Caco-2 (cell line): ENCODE measurements at regions of chr2 and their contacts with region 1.

Region 1: GRCh38 chr2:15782009-15782751 is 158.2 kb upstream of the MYCN start:
- DNase-seq: peak; percentile 92 to 95
- H3K4me3 ChIP-seq: no peak overlapping the region
- H3K4me3 Mint-ChIP-seq: peak overlapping the region; percentile 31
- H3K27ac Mint-ChIP-seq: peak overlapping the region; percentile 17
- H3K4me1 ChIP-seq: peaks cover 44% of the 10 kb centered on the region
- H3K4me1 Mint-ChIP-seq: peaks cover 45% of the 10 kb centered on the region
- H3K27me3 ChIP-seq: no peaks in the 10 kb centered on the region
- H3K27me3 Mint-ChIP-seq: no peaks in the 10 kb centered on the region
- CTCF ChIP-seq: no peak

Region 2: DNA sequence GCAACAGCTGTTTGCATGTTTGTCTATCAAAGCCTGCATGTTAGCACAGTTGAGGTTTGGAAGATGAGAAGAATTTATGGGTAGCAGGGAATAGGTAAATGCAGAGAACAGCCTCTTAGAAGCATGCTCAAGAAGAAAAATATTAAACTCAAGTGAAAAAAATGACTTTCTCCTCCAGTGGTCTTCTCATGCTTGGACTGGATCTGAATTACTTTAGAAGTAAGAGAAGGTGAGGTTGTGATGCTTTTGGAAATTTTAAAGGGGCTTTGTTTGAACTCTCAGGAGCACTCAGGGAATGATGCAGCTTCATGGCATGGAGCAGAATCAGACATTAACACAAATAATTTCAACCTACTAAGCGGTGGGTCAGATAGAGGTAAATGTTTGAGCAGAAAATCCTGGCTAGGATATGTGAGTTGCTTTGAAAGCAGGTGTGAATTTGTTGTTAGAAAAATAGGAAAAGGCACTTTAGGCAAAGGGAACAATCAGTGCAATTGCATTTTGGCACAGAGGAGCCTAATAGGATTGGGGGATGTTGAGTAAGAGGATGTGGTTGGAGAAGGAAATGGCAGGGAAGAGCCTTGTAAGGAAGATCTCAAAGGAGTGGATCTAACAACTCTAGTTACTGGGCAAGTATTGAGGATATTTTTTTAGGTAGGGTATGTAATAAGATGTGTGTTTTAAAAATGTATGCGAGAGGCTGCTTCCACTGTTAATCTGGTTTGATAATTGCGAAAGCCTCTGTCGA is 114.2 kb before region 1 on chr2:
- CTCF ChIA-PET with region 1: no interaction called
- POLR2A ChIA-PET with region 1: no interaction called
- intact Hi-C with region 1: loop called (anchors 1 kb)
- DNase-seq: no peak
- H3K4me3 ChIP-seq: no peak overlapping the region
- H3K4me3 Mint-ChIP-seq: no peak overlapping the region
- H3K27ac Mint-ChIP-seq: no peak overlapping the region
- H3K4me1 ChIP-seq: peaks cover 27% of the 10 kb centered on the region; the same call in 1 of the 2 replicates
- H3K4me1 Mint-ChIP-seq: peaks cover 29% of the 10 kb centered on the region
- H3K27me3 ChIP-seq: no peaks in the 10 kb centered on the region
- H3K27me3 Mint-ChIP-seq: no peaks in the 10 kb centered on the region
- CTCF ChIP-seq: no peak

Region 3: GRCh38 chr2:15748736-15749323 is 33.4 kb before region 1 on chr2:
- CTCF ChIA-PET with region 1: no interaction called
- POLR2A ChIA-PET with region 1: interaction called, 5 read pairs
- intact Hi-C with region 1: loop called (anchors 1 kb)
- DNase-seq: peak in 1 of 2 experiments; percentile 59
- H3K4me3 ChIP-seq: no peak overlapping the region
- H3K4me3 Mint-ChIP-seq: no peak overlapping the region
- H3K27ac Mint-ChIP-seq: peak overlapping the region; percentile 93
- H3K4me1 ChIP-seq: peaks cover 74% of the 10 kb centered on the region
- H3K4me1 Mint-ChIP-seq: peaks cover 48% of the 10 kb centered on the region
- H3K27me3 ChIP-seq: no peaks in the 10 kb centered on the region
- H3K27me3 Mint-ChIP-seq: no peaks in the 10 kb centered on the region
- CTCF ChIP-seq: peak; percentile 27 to 40

Region 4: GRCh38 chr2:15890936-15891900 is 109.0 kb after region 1 on chr2:
- CTCF ChIA-PET with region 1: no interaction called
- POLR2A ChIA-PET with region 1: no interaction called
- intact Hi-C with region 1: loop called (anchors 1 kb)
- DNase-seq: peak; percentile 89 to 94
- H3K4me3 ChIP-seq: no peak overlapping the region
- H3K4me3 Mint-ChIP-seq: peak overlapping the region; percentile 29
- H3K27ac Mint-ChIP-seq: peak overlapping the region; percentile 96
- H3K4me1 ChIP-seq: peaks cover 45% of the 10 kb centered on the region
- H3K4me1 Mint-ChIP-seq: peaks cover 58% of the 10 kb centered on the region
- H3K27me3 ChIP-seq: no peaks in the 10 kb centered on the region
- H3K27me3 Mint-ChIP-seq: no peaks in the 10 kb centered on the region
- CTCF ChIP-seq: no peak

Region 5: GRCh38 chr2:16507655-16508489 is 725.7 kb after region 1 on chr2:
- CTCF ChIA-PET with region 1: no interaction called
- POLR2A ChIA-PET with region 1: no interaction called
- intact Hi-C with region 1: loop called (anchors 5 kb)
- DNase-seq: peak; percentile 66 to 82
- H3K4me3 ChIP-seq: peak overlapping the region; percentile 26
- H3K4me3 Mint-ChIP-seq: peak overlapping the region; percentile 61
- H3K27ac Mint-ChIP-seq: peak overlapping the region; percentile 37
- H3K4me1 ChIP-seq: peaks cover 36% of the 10 kb centered on the region
- H3K4me1 Mint-ChIP-seq: peaks cover 12% of the 10 kb centered on the region
- H3K27me3 ChIP-seq: no peaks in the 10 kb centered on the region
- H3K27me3 Mint-ChIP-seq: no peaks in the 10 kb centered on the region
- CTCF ChIP-seq: peak; percentile 83 to 91